ENCODE measurements at regions of chr1 and their contacts with region 1.

Region 1: GRCh38 chr1:192539297-192540092 is 36.1 kb upstream of the RGS1 start:
- DNase-seq: peak in 1 of 9 experiments; percentile 46
- ATAC-seq: peak; percentile 28
- H3K4me3 ChIP-seq: no peak overlapping the region
- H3K4me3 Mint-ChIP-seq: peak overlapping the region; percentile 3
- H3K27ac ChIP-seq: peak overlapping the region; percentile 18 to 19
- H3K27ac Mint-ChIP-seq: peak overlapping the region; percentile 88
- H3K4me1 ChIP-seq: peaks cover 13% of the 10 kb centered on the region
- H3K4me1 Mint-ChIP-seq: peaks cover 28% of the 10 kb centered on the region
- H3K27me3 ChIP-seq: no peaks in the 10 kb centered on the region
- H3K27me3 Mint-ChIP-seq: no peaks in the 10 kb centered on the region
- CTCF ChIP-seq: no peak

Region 2: GRCh38 chr1:192382758-192383157 is 156.7 kb before region 1 on chr1:
- CTCF ChIA-PET with region 1: no interaction called
- POLR2A ChIA-PET with region 1: no interaction called
- intact Hi-C with region 1: no loop called
- DNase-seq: no peak
- ATAC-seq: no peak
- H3K4me3 ChIP-seq: no peak overlapping the region
- H3K4me3 Mint-ChIP-seq: no peak overlapping the region
- H3K27ac ChIP-seq: no peak overlapping the region
- H3K27ac Mint-ChIP-seq: no peak overlapping the region
- H3K4me1 ChIP-seq: no peaks in the 10 kb centered on the region
- H3K4me1 Mint-ChIP-seq: no peaks in the 10 kb centered on the region
- H3K27me3 ChIP-seq: no peaks in the 10 kb centered on the region
- H3K27me3 Mint-ChIP-seq: no peaks in the 10 kb centered on the region
- CTCF ChIP-seq: no peak

Region 3: DNA sequence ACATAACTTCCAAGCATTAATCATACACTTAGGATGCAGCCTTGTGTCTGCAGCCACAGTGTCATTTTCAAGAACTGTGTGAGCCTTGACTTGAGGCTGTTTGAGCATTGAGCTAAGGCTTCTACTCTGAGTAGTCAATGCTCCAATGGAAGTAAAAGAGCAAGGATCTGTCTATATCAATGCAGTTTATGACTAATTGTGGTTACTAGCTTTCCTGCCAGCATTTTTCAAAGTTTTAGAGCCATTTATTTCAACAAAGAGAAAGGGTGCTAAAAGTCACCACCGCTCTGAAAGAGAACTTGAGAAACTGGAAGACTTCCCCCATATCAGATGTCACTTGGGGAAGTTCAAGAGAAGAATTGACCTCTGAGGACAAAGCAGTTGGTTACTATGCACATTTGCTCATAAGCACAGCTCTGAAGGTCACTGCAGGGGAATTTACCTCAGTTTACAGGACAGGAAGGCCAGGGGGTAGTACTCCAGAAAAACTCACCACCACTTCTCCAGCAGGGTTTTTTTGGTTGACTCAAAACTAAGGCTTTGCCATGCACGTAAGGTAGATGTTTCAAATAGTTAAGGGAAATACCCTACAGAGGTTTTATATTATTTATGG is 11.5 kb after region 1 on chr1:
- CTCF ChIA-PET with region 1: no interaction called
- POLR2A ChIA-PET with region 1: interaction called, 5 read pairs
- intact Hi-C with region 1: loop called in 1 of 2 experiments (anchors 1 kb)
- DNase-seq: peak in 2 of 9 experiments; percentile 28 to 50
- ATAC-seq: peak; percentile 74
- H3K4me3 ChIP-seq: no peak overlapping the region
- H3K4me3 Mint-ChIP-seq: no peak overlapping the region
- H3K27ac ChIP-seq: peak overlapping the region in 1 of 2 experiments; percentile 7
- H3K27ac Mint-ChIP-seq: peak overlapping the region; percentile 20
- H3K4me1 ChIP-seq: peaks cover 6% of the 10 kb centered on the region
- H3K4me1 Mint-ChIP-seq: peaks cover 25% of the 10 kb centered on the region
- H3K27me3 ChIP-seq: no peaks in the 10 kb centered on the region
- H3K27me3 Mint-ChIP-seq: peaks cover 2% of the 10 kb centered on the region
- CTCF ChIP-seq: no peak

Region 4: DNA sequence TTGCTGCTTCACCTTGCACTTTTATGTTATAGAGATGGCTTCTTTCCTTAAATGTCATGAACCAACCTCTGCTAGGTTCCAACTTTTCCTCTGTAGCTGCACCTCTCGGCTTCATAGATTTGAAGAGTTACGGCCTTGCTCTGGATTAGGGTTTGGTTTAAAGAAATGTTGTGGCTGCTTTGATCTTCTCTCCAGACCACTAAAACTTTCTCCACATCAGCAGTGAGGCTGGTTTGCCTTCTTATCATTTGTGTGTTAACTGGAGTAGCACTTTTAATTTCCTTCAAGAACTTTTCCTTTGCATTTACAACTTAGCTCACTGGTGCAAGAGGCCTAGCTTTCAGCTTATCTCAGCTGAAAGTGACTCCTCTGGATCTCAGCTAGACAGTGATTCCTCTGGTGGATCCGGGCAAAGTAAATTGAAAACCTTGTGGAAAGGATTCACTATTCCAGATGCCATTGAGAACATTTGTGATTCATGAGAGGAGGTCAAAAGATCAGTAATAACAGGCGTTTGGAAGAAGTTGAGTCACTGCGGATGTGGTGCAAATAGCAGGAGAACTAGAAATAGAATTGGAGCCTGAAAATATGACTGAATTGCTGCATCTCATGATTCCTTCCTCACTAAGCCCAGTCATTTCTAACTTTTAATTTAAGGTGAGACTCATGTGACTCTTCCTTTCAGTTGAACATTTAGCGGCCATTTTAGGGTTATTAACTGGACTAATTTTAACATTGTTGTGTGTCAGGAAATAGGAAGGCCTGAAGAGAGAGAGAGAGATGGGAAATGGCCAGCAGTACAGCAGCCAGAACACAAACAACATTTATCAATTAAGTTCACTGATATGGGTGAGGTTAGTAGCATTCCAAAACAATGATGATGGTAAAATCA is 19.9 kb after region 1 on chr1:
- CTCF ChIA-PET with region 1: interaction called, 3 read pairs
- POLR2A ChIA-PET with region 1: interaction called, 3 read pairs
- intact Hi-C with region 1: loop called in 1 of 2 experiments (anchors 2 kb)
- DNase-seq: peak in 1 of 9 experiments; percentile 41
- ATAC-seq: peak; percentile 14
- H3K4me3 ChIP-seq: no peak overlapping the region
- H3K4me3 Mint-ChIP-seq: no peak overlapping the region
- H3K27ac ChIP-seq: no peak overlapping the region
- H3K27ac Mint-ChIP-seq: peak overlapping the region; percentile 5
- H3K4me1 ChIP-seq: no peaks in the 10 kb centered on the region
- H3K4me1 Mint-ChIP-seq: peaks cover 10% of the 10 kb centered on the region
- H3K27me3 ChIP-seq: no peaks in the 10 kb centered on the region
- H3K27me3 Mint-ChIP-seq: no peaks in the 10 kb centered on the region
- CTCF ChIP-seq: no peak

Region 5: DNA sequence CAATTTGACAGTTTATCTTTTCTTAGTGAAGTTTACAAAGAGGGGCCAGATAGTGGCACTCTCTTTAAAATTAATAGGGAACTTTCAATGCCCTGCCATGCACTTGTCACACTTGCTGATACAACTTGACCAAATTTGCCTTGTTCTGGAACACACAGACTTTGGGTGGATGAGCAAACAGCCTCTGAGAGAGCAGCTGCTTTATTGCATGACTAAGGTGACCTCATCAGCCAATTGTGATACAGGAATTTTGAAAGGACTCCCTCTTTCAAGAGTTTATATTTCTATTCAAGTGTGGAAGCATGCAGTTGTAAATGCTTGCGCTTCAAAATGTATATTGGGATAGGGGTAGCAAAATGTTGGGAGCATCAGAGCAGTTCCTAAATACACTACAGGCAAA is 34.0 kb after region 1 on chr1:
- CTCF ChIA-PET with region 1: no interaction called
- POLR2A ChIA-PET with region 1: interaction called, 4 read pairs
- intact Hi-C with region 1: loop called (anchors 2 kb)
- DNase-seq: peak in 1 of 9 experiments; percentile 23
- ATAC-seq: no peak
- H3K4me3 ChIP-seq: no peak overlapping the region
- H3K4me3 Mint-ChIP-seq: no peak overlapping the region
- H3K27ac ChIP-seq: no peak overlapping the region
- H3K27ac Mint-ChIP-seq: no peak overlapping the region
- H3K4me1 ChIP-seq: peaks cover 18% of the 10 kb centered on the region
- H3K4me1 Mint-ChIP-seq: peaks cover 44% of the 10 kb centered on the region
- H3K27me3 ChIP-seq: no peaks in the 10 kb centered on the region
- H3K27me3 Mint-ChIP-seq: no peaks in the 10 kb centered on the region
- CTCF ChIP-seq: no peak

Region 6: DNA sequence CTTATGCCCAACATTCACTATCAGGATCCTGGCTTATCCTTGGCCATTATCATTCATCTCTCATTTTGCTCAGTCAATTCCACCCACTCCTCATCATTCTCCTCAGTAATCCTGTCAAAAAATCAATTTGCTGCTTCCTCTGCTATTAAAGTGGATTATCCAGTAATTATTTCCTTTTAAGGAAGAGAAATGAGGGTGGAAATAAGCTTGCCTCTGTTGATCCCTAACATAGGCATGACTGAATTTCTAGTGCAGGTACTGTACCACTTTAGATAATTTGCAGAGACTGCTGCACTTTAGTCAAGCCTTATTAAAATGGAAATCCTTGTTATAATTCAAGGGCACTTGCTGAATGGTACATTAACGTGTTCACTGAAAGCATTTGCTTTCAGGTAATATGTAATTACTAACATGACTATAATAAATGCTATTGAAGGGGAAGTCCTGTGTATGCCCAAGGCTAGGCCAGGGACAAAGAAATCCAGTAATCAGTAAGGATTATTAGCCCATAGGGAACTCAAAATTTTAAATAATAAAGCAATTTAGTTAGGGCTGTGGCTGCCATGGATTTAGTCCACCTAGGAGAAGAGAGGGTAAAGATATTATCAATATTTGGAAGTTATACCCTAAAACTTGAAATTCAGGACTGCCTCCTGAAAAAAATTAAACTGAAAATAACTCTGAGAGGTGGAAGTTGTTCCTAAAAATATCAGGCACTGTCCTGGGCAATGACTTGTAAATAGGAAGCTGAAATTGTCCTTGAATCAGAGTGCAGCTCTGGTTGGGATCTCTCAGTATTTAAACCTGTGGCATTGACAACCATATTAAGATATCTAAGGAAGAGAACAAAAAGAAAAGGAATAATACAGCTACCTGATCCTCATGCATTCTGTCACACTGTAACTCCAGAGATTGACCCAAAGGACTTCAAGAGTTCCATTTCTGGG is 312.8 kb after region 1 on chr1:
- CTCF ChIA-PET with region 1: no interaction called
- POLR2A ChIA-PET with region 1: no interaction called
- intact Hi-C with region 1: no loop called
- DNase-seq: no peak
- ATAC-seq: no peak
- H3K4me3 ChIP-seq: no peak overlapping the region
- H3K4me3 Mint-ChIP-seq: no peak overlapping the region
- H3K27ac ChIP-seq: no peak overlapping the region
- H3K27ac Mint-ChIP-seq: no peak overlapping the region
- H3K4me1 ChIP-seq: no peaks in the 10 kb centered on the region
- H3K4me1 Mint-ChIP-seq: no peaks in the 10 kb centered on the region
- H3K27me3 ChIP-seq: no peaks in the 10 kb centered on the region
- H3K27me3 Mint-ChIP-seq: peaks cover 10% of the 10 kb centered on the region
- CTCF ChIP-seq: no peak